ENCODE measurements at regions of chr2 and their contacts with region 1.

Region 1: DNA sequence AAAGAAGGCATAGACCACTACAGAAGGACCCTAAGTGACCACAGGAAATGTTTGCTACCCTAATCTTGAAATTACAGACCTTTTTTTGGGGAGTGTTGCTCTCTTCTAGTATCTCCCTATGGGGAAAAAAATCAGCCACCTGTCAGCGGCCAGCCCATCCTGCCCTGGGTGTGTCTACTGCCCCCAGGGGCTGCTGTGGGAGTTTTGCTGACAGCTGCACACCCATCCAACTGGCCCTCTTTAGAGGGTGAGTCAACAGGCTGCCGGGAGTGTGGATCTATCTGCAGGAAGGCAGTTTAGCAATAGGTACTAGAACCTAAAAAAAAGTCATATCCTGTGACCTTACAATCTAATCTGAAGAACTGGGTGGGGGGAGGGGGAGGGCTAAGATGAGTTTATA is 796 bp upstream of the DYSF start:
- DNase-seq: peak; percentile 87 to 96
- ATAC-seq: peak; percentile 59 to 67
- H3K4me3 ChIP-seq: peak overlapping the region; percentile 62 to 83 (median 74)
- H3K27ac ChIP-seq: peak overlapping the region; percentile 92 to 99 (median 94)
- H3K4me1 ChIP-seq: peaks cover 66 to 70% of the 10 kb centered on the region in 2 donors
- H3K27me3 ChIP-seq: no peaks in the 10 kb centered on the region
- CTCF ChIP-seq: peak in 4 of 5 experiments; percentile 32 to 56 (median 48)
- POLR2A ChIP-seq: peak in 1 of 2 donors; percentile 23

Region 2: GRCh38 chr2:71226965-71227560 is 225.5 kb before region 1 on chr2 and contains the start of gene PAIP2B:
- in situ Hi-C with region 1: no loop called
- intact Hi-C with region 1: loop called (anchors 2 kb)
- DNase-seq: peak; percentile 99 to 100
- ATAC-seq: peak; percentile 92 to 94
- H3K4me3 ChIP-seq: peak within 1 kb of the TSS; percentile 83 to 93 (median 90)
- H3K27ac ChIP-seq: peak within 1 kb of the TSS; percentile 96 to 98 (median 98)
- H3K4me1 ChIP-seq: peaks cover 19% of the 10 kb centered on the region in 2 donors
- H3K27me3 ChIP-seq: no peaks in the 10 kb centered on the region
- CTCF ChIP-seq: no peak
- POLR2A ChIP-seq: peak; percentile 95 to 97
- total RNA-seq, gene PAIP2B: 14.6 to 32.6 (median 15.9) TPM

Region 3: DNA sequence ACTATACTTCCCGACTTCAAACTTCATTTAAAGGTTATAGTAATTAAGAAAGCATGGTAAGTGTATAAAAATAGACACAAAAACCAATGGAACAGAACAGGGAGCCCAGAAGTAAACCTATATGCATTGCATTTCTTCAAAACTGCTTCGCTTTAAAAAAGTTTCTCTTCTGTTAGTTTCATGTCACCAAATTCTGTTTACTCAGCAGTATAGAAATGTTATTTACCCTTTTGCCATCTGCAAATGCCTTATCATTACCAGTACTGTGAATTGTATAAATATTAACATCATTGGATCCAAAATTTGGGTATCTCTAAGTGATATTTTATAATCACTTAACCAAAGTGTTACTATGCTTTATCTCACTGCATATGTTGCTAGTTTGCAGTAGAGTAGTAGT is 166.9 kb before region 1 on chr2:
- in situ Hi-C with region 1: no loop called
- intact Hi-C with region 1: no loop called
- DNase-seq: no peak
- ATAC-seq: no peak
- H3K4me3 ChIP-seq: no peak overlapping the region
- H3K27ac ChIP-seq: peak overlapping the region; percentile 48 to 96 (median 73)
- H3K4me1 ChIP-seq: peaks cover 36 to 64% of the 10 kb centered on the region in 2 donors
- H3K27me3 ChIP-seq: no peaks in the 10 kb centered on the region
- CTCF ChIP-seq: no peak
- POLR2A ChIP-seq: no peak

Region 4: DNA sequence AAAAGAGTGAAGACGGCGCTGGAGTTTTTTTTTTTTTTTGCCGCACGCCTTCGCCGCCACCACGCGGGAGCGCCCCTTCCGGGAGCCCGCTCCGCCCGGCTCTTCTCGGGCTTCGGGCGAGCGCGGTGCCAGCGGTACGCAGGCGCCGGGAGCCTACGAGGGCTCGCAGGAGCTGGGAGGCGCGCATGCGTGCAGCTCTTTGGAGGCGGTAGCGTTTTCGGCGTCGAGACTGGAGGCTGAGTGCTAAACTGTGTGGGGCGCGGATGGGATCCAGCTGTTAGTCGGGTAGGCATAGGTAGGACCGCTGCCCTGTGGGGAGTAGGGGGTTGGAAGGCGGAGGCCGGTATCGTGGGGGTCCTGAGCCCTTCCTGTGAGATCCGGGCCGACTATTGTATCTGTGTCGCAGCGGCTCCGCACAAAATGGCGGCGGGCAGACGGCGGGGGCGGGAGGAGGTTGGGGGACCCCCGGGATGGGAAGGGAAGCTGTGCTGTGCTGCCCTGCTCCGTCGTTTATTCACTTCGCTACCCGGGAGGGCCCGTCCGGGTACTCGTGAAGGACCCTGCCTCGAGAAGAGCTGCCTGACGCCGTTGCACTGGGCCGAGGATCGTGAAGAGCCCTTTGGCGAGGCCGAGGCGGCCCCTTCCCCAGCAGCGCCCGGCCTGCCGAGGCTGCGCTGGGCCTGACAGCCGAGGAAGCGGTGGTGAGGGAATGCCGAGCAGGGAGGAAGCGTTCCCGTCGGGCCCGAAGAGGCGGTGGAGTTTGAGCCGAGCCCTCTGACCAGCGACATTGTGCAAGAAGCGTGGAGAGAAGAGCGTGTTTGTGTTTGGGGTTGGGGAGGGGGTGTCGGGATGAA is 120.8 kb before region 1 on chr2 and contains the start of gene ZNF638:
- in situ Hi-C with region 1: no loop called
- intact Hi-C with region 1: loop called (anchors 5 kb)
- DNase-seq: peak; percentile 85 to 92
- ATAC-seq: peak; percentile 91 to 94
- H3K4me3 ChIP-seq: peak within 1 kb of the TSS; percentile 81 to 98 (median 85)
- H3K27ac ChIP-seq: peak within 1 kb of the TSS; percentile 94 to 97 (median 95)
- H3K4me1 ChIP-seq: peaks cover 37 to 42% of the 10 kb centered on the region in 2 donors
- H3K27me3 ChIP-seq: no peaks in the 10 kb centered on the region
- CTCF ChIP-seq: peak; percentile 69 to 87 (median 85)
- POLR2A ChIP-seq: peak; percentile 87 to 95
- total RNA-seq, gene ZNF638: 69.7 to 152 (median 95.0) TPM

Region 5: GRCh38 chr2:71716781-71717624 is 264.4 kb after region 1 on chr2:
- in situ Hi-C with region 1: no loop called
- intact Hi-C with region 1: loop called (anchors 10 kb)
- DNase-seq: peak; percentile 97 to 99
- ATAC-seq: peak; percentile 83 to 85
- H3K4me3 ChIP-seq: no peak overlapping the region
- H3K27ac ChIP-seq: peak overlapping the region; percentile 82 to 90 (median 86)
- H3K4me1 ChIP-seq: peaks cover 85 to 86% of the 10 kb centered on the region in 2 donors
- H3K27me3 ChIP-seq: no peaks in the 10 kb centered on the region
- CTCF ChIP-seq: no peak
- POLR2A ChIP-seq: no peak

Region 6: DNA sequence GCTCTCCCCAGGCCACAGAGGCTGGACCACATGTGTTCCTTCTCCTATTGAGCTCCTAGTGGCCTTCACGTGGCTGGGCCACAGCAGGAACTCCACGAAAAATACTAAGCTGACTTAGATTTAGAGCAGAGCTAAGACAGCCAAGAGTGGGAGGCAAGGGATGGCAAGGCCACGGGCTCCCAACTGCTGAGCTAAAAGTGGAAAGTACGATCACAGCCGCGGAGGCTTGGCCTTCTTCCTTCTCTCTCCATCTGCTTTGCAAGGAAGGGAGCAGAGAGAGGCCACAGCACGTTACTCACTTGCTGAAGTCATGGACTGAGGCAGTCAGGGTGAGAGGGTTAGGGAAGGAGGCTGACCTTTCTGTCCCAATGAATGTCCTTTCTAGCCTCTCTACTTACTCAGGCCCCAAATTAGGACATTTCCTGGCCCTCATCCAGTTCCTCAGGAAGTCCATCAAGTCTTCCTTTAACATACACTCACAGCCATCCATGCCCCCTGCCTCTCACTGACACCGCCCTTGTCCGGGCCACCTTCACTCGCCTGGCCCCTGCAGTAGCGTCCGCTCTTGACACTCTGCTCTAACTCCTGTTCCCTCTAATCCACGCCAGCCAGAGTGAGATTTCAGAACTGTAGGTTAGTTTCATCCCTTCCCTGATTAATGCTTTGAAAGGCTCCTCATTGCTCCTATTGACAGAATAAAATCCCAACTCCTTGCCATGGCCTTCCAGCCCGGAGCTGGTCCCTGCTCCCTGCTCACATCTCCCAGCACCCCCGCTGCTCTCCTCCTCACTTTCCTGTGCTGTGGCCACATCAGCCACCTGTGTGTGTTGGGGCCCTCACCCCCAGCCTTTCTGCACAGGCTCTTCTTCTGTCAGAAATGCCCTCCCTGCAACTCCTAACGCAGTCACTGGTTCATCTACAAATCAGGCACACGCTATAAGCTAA is 490.9 kb after region 1 on chr2:
- in situ Hi-C with region 1: no loop called
- intact Hi-C with region 1: loop called (anchors 5 kb)
- DNase-seq: peak; percentile 38 to 64
- ATAC-seq: peak; percentile 9 to 16
- H3K4me3 ChIP-seq: no peak overlapping the region
- H3K27ac ChIP-seq: peak overlapping the region; percentile 49 to 92 (median 74)
- H3K4me1 ChIP-seq: peaks cover 41 to 49% of the 10 kb centered on the region in 2 donors
- H3K27me3 ChIP-seq: no peaks in the 10 kb centered on the region
- CTCF ChIP-seq: no peak
- POLR2A ChIP-seq: no peak